ENCODE measurements at regions of chr3 and their contacts with region 1.

Region 1: GRCh38 chr3:48507351-48508061 is 3.5 kb upstream of the SHISA5 start:
- DNase-seq: peak in 4 of 5 donors; percentile 40 to 45 (median 42)
- ATAC-seq: peak in 1 of 4 donors; percentile 38
- H3K4me3 ChIP-seq: no peak overlapping the region
- H3K27ac ChIP-seq: peak overlapping the region in 1 of 12 donors; percentile 2
- H3K4me1 ChIP-seq: peaks cover 6 to 31% (median 20%) of the 10 kb centered on the region in 12 donors
- H3K27me3 ChIP-seq: no peaks in the 10 kb centered on the region
- CTCF ChIP-seq: peak; percentile 33 to 63 (median 52)
- POLR2A ChIP-seq: no peak

Region 2: GRCh38 chr3:48408823-48409281 is 98.7 kb before region 1 on chr3:
- intact Hi-C with region 1: no loop called
- DNase-seq: peak in 3 of 5 donors; percentile 3 to 12 (median 9)
- ATAC-seq: no peak
- H3K4me3 ChIP-seq: no peak overlapping the region
- H3K27ac ChIP-seq: no peak overlapping the region
- H3K4me1 ChIP-seq: no peaks in the 10 kb centered on the region
- H3K27me3 ChIP-seq: no peaks in the 10 kb centered on the region
- CTCF ChIP-seq: no peak
- POLR2A ChIP-seq: no peak

Region 3: GRCh38 chr3:48465531-48466378 is 41.8 kb before region 1 on chr3:
- intact Hi-C with region 1: loop called (anchors 1 to 5 kb)
- DNase-seq: peak; percentile 95 to 99 (median 98)
- ATAC-seq: peak; percentile 95 to 96 (median 95)
- H3K4me3 ChIP-seq: peak overlapping the region; percentile 24 to 84 (median 62)
- H3K27ac ChIP-seq: peak overlapping the region; percentile 92 to 100 (median 99)
- H3K4me1 ChIP-seq: peaks cover 13 to 63% (median 55%) of the 10 kb centered on the region in 12 donors
- H3K27me3 ChIP-seq: no peaks in the 10 kb centered on the region
- CTCF ChIP-seq: peak; percentile 55 to 90 (median 76)
- POLR2A ChIP-seq: peak in 1 of 2 donors; percentile 81

Region 4: DNA sequence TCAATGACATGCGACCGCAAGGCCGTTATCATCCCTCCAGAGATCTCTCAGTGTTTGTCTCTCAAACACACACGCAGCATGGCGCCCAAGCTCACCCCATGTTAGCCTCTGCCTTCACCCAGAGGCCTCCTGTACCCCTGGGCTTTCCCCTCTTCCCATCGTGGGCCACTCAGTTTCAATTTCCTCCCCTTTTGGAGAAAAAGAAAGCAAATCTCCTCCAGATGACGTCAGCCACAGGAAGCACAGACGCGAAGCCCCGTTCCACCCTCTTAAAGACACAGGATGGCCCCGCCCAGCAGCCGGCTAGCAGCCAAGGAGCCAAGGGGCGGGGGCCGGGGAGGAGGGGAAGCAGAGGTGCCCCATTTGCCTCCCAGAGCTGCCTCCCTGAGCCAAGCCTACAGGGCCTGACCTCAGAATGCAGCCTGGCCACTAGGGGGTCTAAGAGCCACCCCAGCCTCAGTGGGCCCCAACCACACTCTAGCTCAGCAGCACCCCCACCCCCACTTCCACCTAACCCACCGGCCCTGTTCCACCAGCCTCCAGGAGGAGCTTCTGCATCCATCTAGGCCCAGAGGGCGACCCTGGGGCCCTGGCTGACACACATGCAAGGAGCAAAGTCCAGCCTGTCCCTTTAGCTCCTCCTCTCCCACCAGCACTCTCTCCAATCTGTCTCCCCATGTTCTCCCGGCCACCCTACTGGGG is 34.4 kb before region 1 on chr3:
- intact Hi-C with region 1: loop called in 8 of 10 experiments (anchors 2 to 5 kb)
- DNase-seq: peak; percentile 92 to 96 (median 94)
- ATAC-seq: peak; percentile 84 to 95 (median 93)
- H3K4me3 ChIP-seq: peak overlapping the region; percentile 35 to 88 (median 72)
- H3K27ac ChIP-seq: peak overlapping the region; percentile 77 to 99 (median 97)
- H3K4me1 ChIP-seq: peaks cover 11 to 63% (median 52%) of the 10 kb centered on the region in 12 donors
- H3K27me3 ChIP-seq: no peaks in the 10 kb centered on the region
- CTCF ChIP-seq: peak in 11 of 12 donors; percentile 15 to 63 (median 46)
- POLR2A ChIP-seq: peak in 1 of 2 donors; percentile 72